Transverse colon (tissue), 4 donors: ENCODE measurements at regions of chr12 and their contacts with region 1.

Region 1: DNA sequence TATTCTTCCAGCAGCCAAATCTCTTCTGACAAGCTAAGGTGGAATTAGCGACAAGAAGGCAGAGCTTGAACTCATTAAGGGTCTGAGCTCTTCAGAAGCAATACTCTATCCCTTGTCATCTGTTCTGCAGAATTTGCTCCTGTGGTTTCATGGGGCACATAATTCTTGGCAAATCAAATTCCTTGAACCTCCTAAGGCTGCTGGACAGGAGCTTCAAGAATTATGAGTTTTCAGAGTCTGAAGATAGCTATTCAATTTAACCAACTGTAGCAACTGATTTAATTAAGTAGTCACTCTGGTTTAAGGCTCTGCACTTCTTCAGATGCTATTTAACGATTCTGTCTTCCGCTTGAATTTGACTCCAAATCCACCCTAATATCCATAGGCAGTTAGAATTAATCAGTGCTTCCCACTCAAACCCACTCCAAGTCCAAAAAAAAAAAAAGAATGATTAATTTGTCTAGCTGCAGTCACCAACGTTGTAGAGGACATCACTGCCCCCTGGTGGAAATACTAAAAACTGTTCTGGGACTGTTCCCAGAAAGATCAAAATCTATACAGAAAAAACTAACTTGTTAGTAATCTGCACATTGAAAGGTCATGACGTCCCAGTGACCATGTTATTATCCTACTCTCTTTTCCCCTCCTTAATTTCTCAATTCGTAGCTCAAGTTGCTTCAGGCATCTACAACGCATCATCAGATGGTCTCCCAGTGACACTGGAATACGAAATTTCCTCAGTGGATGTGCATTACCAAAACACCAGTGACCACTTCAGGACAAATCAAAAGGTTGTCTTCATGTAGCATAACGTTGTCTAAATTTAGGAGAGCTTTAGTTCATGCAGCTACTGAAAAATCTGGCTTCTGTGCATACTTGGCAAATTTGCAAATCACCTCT is 169.8 kb downstream of the KIF21A start:
- DNase-seq: peak; percentile 20
- H3K4me3 ChIP-seq: no peak overlapping the region
- H3K27ac ChIP-seq: no peak overlapping the region
- H3K4me1 ChIP-seq: no peaks in the 10 kb centered on the region
- H3K27me3 ChIP-seq: no peaks in the 10 kb centered on the region
- CTCF ChIP-seq: peak; percentile 44 to 75 (median 67)
- EP300 ChIP-seq: no peak
- POLR2A ChIP-seq: no peak

Region 2: DNA sequence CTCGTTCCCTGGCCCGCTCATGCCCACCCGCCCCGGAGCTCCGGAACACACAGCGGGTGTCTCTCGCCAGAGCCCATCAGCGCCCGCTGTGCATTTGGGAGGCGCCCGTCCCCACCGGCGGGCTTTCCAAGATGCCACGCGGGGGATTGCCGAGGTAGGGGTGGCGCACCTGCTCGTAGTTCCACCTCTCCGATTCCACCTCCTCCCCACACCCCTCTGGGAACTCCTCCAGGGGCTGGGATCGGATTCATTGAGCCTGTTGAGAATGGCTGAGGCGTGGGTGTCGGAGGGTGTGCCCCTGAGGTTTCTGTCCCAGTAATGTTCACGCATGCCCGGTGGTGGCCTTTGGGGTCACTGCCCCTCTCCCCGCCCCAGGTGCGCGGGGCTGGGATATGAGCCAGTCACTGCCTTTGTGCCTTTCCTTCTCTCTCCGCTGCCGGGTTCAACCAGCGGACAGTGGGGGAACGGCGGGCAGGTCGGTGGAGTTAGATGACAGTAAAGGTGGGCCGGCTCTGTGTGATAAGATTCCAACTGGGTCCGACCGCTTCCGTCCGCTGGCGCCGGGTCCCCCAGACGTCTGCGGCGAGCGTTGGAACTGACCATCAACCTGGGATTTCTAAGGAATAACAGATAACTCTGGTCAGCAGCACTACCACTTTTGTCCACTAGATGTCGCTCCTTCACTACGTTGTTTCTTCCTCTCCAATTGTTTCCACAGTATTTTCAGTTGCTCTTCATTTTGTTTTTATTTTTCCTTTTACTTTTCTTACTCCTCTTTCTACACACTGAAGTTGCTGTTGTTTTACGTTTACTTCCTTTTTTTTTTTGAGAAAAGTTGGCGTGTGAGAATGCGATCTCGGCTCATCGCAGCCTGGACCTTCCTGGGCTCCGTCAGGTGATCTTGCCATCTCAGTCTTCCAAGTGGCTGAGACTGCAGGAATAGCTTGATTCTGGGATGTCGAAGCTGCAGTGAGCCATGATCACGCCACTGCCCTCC is 1134.6 kb before region 1 on chr12:
- in situ Hi-C with region 1: loop called in 2 of 4 experiments (anchors 25 kb)
- intact Hi-C with region 1: no loop called
- DNase-seq: peak; percentile 71
- H3K4me3 ChIP-seq: peak overlapping the region in 3 of 4 donors; percentile 13 to 54 (median 24)
- H3K27ac ChIP-seq: no peak overlapping the region
- H3K4me1 ChIP-seq: peaks cover 0 to 8% (median 7%) of the 10 kb centered on the region in 4 donors
- H3K27me3 ChIP-seq: peaks cover 14% of the 10 kb centered on the region
- CTCF ChIP-seq: peak; percentile 95 to 99 (median 98)
- EP300 ChIP-seq: no peak
- POLR2A ChIP-seq: no peak

Region 3: DNA sequence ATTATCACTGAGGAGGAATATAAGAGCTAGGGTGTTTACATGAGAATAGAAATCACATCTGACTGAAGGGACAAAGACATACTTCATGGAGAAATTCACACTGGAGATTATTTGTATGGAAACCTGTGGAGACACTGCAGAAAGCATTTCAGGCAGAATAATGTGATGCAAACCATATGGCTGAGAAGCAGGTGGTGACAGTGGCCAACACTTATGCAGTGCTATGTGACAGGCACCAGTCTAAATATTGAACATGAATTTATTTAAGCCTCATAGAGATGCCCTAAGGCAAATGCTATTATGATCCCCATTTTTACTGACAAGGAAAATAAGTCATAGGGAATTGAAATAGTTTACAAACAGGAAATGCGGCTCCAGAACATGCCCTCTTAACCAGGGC is 940.3 kb before region 1 on chr12:
- in situ Hi-C with region 1: loop called in 3 of 4 experiments (anchors 10 to 25 kb)
- intact Hi-C with region 1: no loop called
- DNase-seq: no peak
- H3K4me3 ChIP-seq: no peak overlapping the region
- H3K27ac ChIP-seq: no peak overlapping the region
- H3K4me1 ChIP-seq: peaks cover 0 to 3% (median 0%) of the 10 kb centered on the region in 4 donors
- H3K27me3 ChIP-seq: no peaks in the 10 kb centered on the region
- CTCF ChIP-seq: no peak
- EP300 ChIP-seq: no peak
- POLR2A ChIP-seq: no peak

Region 4: GRCh38 chr12:38728894-38729293 is 544.2 kb before region 1 on chr12:
- in situ Hi-C with region 1: no loop called
- intact Hi-C with region 1: no loop called
- DNase-seq: no peak
- H3K4me3 ChIP-seq: no peak overlapping the region
- H3K27ac ChIP-seq: no peak overlapping the region
- H3K4me1 ChIP-seq: no peaks in the 10 kb centered on the region
- H3K27me3 ChIP-seq: no peaks in the 10 kb centered on the region
- CTCF ChIP-seq: no peak
- EP300 ChIP-seq: no peak
- POLR2A ChIP-seq: no peak

Region 5: DNA sequence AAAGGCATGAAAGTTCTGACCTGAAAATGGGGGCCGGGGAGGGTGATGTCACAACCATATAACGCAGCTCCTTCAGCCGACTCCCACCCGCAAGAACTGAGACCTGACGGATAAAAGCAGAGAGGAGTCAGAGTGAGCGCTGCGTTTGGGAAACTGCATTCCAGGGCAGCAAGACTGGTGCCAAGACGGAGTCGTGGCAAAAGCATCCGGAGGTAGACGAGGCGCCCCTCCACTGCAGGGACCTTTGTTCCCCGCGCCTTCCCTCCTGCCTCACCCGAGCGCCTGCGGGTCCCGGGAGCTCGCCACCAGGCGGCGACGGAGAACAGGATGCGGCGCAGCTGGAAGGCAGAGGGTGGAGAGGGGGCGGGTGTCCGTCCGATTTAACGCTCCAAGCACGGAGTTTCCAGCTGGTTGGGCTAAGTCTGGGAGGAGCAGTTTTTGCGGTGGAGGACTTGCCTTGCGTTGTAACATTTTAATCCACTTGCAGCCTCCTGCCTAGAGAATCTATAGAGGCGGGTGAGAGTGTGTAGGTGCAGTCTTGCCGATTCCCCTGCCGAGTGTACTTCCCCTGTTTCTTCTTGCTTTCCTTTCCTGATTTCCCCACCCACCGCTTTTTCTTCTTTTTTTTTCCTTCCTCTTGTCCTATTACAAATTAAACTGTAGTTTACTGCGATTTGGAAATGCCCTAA is 366.5 kb before region 1 on chr12:
- in situ Hi-C with region 1: loop called in 1 of 4 experiments (anchors 25 kb)
- intact Hi-C with region 1: no loop called
- DNase-seq: peak; percentile 91
- H3K4me3 ChIP-seq: peak overlapping the region; percentile 52 to 69 (median 60)
- H3K27ac ChIP-seq: peak overlapping the region; percentile 83 to 95 (median 90)
- H3K4me1 ChIP-seq: peaks cover 0 to 19% (median 8%) of the 10 kb centered on the region in 4 donors
- H3K27me3 ChIP-seq: no peaks in the 10 kb centered on the region
- CTCF ChIP-seq: peak; percentile 81 to 90 (median 85)
- EP300 ChIP-seq: no peak
- POLR2A ChIP-seq: peak; percentile 45

Region 6: GRCh38 chr12:39145175-39145999 is 127.7 kb before region 1 on chr12:
- in situ Hi-C with region 1: loop called in 2 of 4 experiments (anchors 10 kb)
- intact Hi-C with region 1: no loop called
- DNase-seq: peak; percentile 73
- H3K4me3 ChIP-seq: peak overlapping the region; percentile 51 to 63 (median 58)
- H3K27ac ChIP-seq: peak overlapping the region in 2 of 4 donors; percentile 8 to 38
- H3K4me1 ChIP-seq: peaks cover 0 to 3% (median 0%) of the 10 kb centered on the region in 4 donors
- H3K27me3 ChIP-seq: peaks cover 22% of the 10 kb centered on the region
- CTCF ChIP-seq: peak; percentile 60 to 88 (median 75)
- EP300 ChIP-seq: no peak
- POLR2A ChIP-seq: no peak

Region 7: DNA sequence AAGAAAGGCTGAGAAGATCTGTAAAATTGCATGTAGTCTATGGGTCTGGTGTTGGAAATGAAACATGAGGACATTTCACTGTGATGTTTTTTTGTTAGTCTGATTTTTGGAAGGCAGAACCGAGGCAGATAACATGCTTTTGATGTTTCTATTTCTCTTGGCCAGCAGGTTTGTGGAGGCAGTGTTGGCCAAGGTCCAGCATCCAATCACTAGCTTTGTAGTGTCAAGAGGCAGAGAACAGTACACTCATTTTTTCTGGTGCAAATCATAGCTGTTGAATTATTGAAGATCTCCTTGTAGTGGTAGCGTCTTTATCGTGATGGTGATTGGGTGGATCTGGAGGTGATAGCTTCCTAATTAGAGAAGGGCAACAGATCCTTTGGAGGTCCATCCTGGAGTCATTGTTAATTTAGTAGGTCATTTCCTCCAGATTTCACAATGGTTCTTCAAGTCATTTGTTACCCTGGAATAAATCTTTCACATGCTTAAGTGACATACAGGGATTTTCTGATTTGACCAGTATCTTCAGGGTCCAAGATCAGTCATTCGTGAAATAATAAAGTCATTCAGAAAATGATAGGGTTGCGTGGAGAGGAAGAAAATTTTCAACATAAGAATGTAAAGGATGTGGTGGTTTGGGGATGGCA is 115.3 kb before region 1 on chr12:
- in situ Hi-C with region 1: loop called in 1 of 4 experiments (anchors 10 kb)
- intact Hi-C with region 1: no loop called
- DNase-seq: no peak
- H3K4me3 ChIP-seq: no peak overlapping the region
- H3K27ac ChIP-seq: no peak overlapping the region
- H3K4me1 ChIP-seq: no peaks in the 10 kb centered on the region
- H3K27me3 ChIP-seq: no peaks in the 10 kb centered on the region
- CTCF ChIP-seq: no peak
- EP300 ChIP-seq: no peak
- POLR2A ChIP-seq: no peak

Region 8: DNA sequence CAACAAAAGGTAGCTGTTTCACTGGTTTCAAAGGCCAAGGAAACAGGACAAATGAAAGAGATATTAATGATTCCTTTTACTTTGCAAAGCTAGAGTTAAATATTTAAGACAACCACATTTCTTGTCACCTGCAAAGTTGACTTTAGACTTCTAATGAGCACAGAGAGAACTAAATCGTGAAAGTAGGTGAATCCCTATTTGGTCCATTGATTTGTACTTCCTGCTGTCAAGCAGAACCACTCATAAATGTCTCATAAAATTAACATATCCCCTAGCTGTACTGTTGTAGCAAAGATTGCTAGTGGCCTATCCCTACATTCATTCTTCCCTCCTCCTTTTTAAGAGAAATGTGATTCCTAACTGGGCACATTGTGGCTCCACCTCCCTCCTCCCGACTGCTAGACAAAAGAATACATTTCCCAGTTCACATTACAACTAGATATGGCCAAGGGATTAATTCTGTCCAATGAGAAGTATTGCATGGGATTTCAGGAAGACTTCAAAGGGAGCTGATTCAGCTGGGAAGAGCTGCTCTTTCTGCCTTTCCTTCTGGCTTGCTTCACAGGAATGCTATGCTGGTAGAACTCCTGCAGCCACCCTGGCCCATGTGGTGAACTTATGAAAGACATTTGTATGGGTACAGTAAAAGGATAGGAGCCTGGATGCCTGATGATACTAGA is 574.0 kb after region 1 on chr12:
- in situ Hi-C with region 1: no loop called
- intact Hi-C with region 1: no loop called
- DNase-seq: no peak
- H3K4me3 ChIP-seq: no peak overlapping the region
- H3K27ac ChIP-seq: no peak overlapping the region
- H3K4me1 ChIP-seq: no peaks in the 10 kb centered on the region
- H3K27me3 ChIP-seq: no peaks in the 10 kb centered on the region
- CTCF ChIP-seq: no peak
- EP300 ChIP-seq: no peak
- POLR2A ChIP-seq: no peak